Activated CD8-positive, alpha-beta T cell treated with anti-CD3 and anti-CD28 coated beads for 36 hours (primary cell): ENCODE measurements at regions of chr14 and their contacts with region 1.

Region 1: DNA sequence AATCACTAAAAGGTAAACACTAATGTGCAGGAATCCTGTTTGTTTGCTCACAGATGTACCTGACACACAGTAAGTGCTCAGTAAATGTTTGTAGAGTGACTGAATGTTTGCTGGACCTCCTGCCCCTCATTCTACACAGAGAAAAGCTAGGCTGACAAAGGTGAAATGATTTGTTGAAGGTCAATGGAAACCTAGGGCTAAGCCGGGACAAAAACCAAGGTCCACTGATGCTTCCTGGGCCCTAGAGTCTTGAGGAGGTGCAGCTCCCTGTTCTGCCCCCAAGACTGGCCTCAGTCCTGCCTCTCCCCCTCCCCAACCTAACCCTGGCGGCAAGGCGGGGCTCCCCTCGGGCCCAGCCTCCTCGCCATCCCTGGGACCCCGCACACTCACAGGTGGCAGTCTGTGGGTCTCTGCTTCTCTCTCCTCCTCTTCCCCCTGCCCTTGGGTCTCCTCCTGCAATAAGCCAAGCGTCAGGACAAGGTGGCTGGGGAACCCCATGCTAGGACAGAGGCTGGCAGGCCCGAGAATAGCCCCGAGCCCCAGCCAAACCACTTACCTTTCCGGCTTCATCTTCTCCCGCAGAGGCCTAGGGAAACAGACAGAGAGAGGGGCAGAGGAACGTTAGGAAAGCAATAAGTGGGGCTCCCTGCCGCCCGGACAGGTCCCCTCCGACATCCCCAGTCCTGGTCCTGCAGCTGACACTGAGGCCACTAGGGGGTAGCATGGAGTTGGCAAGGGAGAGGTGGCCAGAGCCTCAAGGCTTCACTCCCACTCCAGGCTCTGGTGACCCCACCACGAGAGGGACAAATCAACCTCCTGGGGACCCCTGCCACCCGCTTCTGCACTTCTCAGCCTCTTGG is 9.3 kb downstream of the PGF start:
- DNase-seq: peak; percentile 87
- ATAC-seq: peak; percentile 82
- H3K4me3 Mint-ChIP-seq: no peak overlapping the region
- H3K27ac Mint-ChIP-seq: no peak overlapping the region
- H3K4me1 Mint-ChIP-seq: peaks cover 14% of the 10 kb centered on the region
- H3K27me3 Mint-ChIP-seq: no peaks in the 10 kb centered on the region
- CTCF ChIP-seq: peak; percentile 92

Region 2: DNA sequence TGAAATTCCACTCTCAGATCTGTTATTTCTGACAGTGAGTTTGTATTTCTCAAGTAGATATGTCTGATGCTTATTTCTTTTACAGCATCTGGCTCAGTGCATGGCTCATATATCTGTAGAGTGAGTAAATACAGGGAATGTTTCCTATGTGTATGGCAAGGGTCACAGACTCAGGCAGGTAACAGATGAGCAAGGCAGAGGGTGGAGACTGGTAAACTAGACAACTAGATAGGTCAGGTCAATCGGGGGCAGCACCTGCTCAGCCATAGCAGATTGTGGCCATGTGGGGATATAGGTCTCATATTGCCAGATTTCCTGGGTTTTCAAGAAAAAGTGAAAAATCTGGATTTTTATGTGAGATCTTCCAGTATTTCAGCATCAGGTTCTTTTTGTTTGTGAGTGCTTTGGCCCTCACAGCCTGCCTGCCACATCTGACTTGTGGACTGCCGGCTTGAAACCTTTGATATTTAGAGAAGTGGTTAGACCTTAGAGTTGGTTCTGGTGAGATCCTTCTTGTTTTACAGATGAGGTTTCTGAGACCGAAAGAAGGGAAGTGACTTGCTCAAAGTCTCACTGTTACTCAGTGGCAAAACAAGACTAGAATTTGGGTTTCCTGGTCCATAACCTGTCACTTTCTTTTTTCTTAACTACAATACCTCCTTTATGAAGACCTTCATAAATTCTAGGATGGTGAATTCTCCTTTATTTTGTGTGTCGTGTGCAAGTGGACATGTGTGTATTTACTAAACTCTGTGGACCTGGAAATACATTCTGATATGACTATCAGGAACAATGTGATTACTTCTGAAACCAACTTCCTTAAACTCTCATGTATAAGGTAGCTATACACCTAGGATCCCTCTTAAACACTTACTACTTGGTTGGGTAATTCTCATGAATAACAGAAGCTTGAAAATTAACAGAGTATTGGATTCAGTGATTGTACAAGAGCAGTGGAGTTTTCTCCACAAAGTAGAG is 104.5 kb before region 1 on chr14:
- CTCF ChIA-PET with region 1: no interaction called
- POLR2A ChIA-PET with region 1: no interaction called
- intact Hi-C with region 1: no loop called
- DNase-seq: peak; percentile 56
- ATAC-seq: peak; percentile 78
- H3K4me3 Mint-ChIP-seq: peak overlapping the region; percentile 0
- H3K27ac Mint-ChIP-seq: peak overlapping the region; percentile 60
- H3K4me1 Mint-ChIP-seq: peaks cover 64% of the 10 kb centered on the region
- H3K27me3 Mint-ChIP-seq: no peaks in the 10 kb centered on the region
- CTCF ChIP-seq: no peak

Region 3: GRCh38 chr14:74905375-74906142 is 40.5 kb before region 1 on chr14:
- CTCF ChIA-PET with region 1: interaction called, 10 read pairs
- POLR2A ChIA-PET with region 1: no interaction called
- intact Hi-C with region 1: no loop called
- DNase-seq: peak; percentile 84
- ATAC-seq: peak; percentile 81
- H3K4me3 Mint-ChIP-seq: no peak overlapping the region
- H3K27ac Mint-ChIP-seq: peak overlapping the region; percentile 55
- H3K4me1 Mint-ChIP-seq: peaks cover 10% of the 10 kb centered on the region
- H3K27me3 Mint-ChIP-seq: no peaks in the 10 kb centered on the region
- CTCF ChIP-seq: peak; percentile 97

Region 4: GRCh38 chr14:74932401-74932901 is 13.6 kb before region 1 on chr14:
- CTCF ChIA-PET with region 1: interaction called, 13 read pairs
- POLR2A ChIA-PET with region 1: no interaction called
- intact Hi-C with region 1: no loop called
- DNase-seq: no peak
- ATAC-seq: peak; percentile 30
- H3K4me3 Mint-ChIP-seq: no peak overlapping the region
- H3K27ac Mint-ChIP-seq: no peak overlapping the region
- H3K4me1 Mint-ChIP-seq: peaks cover 12% of the 10 kb centered on the region
- H3K27me3 Mint-ChIP-seq: no peaks in the 10 kb centered on the region
- CTCF ChIP-seq: no peak

Region 5: DNA sequence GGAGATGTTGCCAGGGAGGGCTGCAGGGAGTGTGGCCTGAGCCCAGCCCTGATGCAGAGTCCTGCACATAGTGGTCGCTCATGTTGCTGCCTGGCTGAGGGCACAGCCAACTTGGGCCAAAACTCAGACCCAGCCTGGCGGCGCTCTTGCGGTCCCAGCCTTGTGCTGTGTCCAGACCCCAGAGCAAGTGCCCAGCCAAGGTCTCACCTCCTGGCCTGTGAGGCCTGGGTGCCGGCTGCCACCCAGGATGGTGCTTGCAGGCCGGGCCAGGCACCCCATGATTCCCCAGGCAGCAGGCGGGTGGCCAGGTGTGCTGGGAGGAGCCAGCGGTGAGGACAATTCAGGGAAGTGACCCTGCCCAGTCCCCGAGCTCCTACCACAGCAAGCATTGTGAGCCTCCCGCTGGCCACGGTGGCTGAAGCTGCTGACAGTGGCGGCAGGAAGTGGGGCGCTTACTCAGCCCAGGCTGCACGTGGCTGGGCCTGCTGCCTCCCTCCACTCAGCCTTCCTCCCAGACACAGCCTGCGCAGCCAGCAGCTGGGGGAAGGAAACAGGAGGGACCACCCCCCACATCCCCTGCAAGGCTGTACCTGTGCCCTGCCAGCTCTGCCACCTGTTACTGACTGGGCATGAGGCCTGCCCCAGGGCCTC is 27.1 kb after region 1 on chr14:
- CTCF ChIA-PET with region 1: interaction called, 26 read pairs
- POLR2A ChIA-PET with region 1: no interaction called
- intact Hi-C with region 1: no loop called
- DNase-seq: peak; percentile 68
- ATAC-seq: peak; percentile 89
- H3K4me3 Mint-ChIP-seq: no peak overlapping the region
- H3K27ac Mint-ChIP-seq: peak overlapping the region; percentile 25
- H3K4me1 Mint-ChIP-seq: peaks cover 5% of the 10 kb centered on the region
- H3K27me3 Mint-ChIP-seq: no peaks in the 10 kb centered on the region
- CTCF ChIP-seq: no peak

Region 6: GRCh38 chr14:75307700-75308379 is 361.8 kb after region 1 on chr14:
- CTCF ChIA-PET with region 1: interaction called, 4 read pairs
- POLR2A ChIA-PET with region 1: no interaction called
- intact Hi-C with region 1: loop called (anchors 5 kb)
- DNase-seq: peak; percentile 82
- ATAC-seq: peak; percentile 62
- H3K4me3 Mint-ChIP-seq: no peak overlapping the region
- H3K27ac Mint-ChIP-seq: no peak overlapping the region
- H3K4me1 Mint-ChIP-seq: peaks cover 13% of the 10 kb centered on the region
- H3K27me3 Mint-ChIP-seq: peaks cover 1% of the 10 kb centered on the region
- CTCF ChIP-seq: peak; percentile 97